ENCODE measurements at regions of chr6 and their contacts with region 1.

Region 1: DNA sequence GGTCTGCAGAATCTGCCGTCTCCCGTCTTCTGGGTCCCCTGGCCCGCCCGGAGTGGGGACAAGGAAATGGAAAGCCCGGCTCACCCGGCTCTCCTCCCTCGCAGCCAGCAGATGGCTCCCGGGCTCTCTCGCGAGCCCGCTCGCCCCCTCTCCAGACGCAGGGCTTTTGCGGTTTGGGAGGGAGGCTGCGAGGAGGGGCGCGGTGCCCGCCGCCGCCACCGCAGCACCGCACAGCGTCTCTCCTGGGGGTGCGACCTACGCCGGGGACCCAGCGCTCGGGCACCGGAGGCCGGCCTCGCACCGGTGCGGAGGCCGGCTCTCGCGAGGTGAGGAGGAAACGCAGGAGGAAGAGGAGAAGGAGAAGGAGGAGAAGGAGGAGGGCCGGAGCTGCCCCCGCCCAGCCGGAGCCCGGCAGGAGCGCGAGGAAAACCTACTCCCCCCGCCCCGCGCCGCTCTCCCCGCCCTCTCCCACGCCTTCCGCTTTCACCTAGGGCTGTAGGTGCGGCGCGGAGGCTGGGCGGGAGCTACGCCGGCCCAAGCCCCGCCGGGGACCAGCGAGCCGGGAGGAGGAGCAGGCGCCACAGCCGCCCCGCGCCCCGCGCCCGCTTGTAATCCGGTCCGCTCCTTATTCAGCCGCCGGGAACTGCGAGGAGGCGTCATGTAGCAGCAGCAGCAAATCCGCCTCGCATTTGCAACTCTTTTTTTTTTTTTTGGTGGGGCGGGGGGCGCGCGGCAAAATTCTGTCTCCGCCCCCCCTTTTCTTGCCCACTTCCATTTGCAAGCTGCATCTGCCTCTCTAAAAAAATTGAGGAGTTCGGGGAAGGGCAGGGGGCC is at the start of gene CARMIL1:
- DNase-seq: peak; percentile 17 to 80 (median 52)
- ATAC-seq: peak; percentile 75 to 82 (median 78)
- H3K4me3 ChIP-seq: peak within 1 kb of the TSS; percentile 67 to 88
- H3K4me3 Mint-ChIP-seq: peak within 1 kb of the TSS; percentile 85 to 90 (median 88)
- H3K27ac ChIP-seq: peak within 1 kb of the TSS; percentile 0
- H3K27ac Mint-ChIP-seq: peak within 1 kb of the TSS; percentile 68 to 75
- H3K4me1 ChIP-seq: peaks cover 14 to 22% of the 10 kb centered on the region in 2 experiments
- H3K4me1 Mint-ChIP-seq: peaks cover 30 to 35% (median 30%) of the 10 kb centered on the region in 3 donors
- H3K27me3 ChIP-seq: peaks cover 0 to 5% of the 10 kb centered on the region in 2 experiments
- H3K27me3 Mint-ChIP-seq: peaks cover 0 to 6% of the 10 kb centered on the region in 2 donors
- total RNA-seq, gene CARMIL1: 4.0 to 11.6 (median 6.1) TPM

Region 2: GRCh38 chr6:25263657-25264056 is 15.5 kb before region 1 on chr6:
- CTCF ChIA-PET with region 1: interaction called in 1 of 2 experiments, 12 read pairs
- POLR2A ChIA-PET with region 1: no interaction called
- DNase-seq: no peak
- ATAC-seq: no peak
- H3K4me3 ChIP-seq: no peak overlapping the region
- H3K4me3 Mint-ChIP-seq: no peak overlapping the region
- H3K27ac ChIP-seq: no peak overlapping the region
- H3K27ac Mint-ChIP-seq: no peak overlapping the region
- H3K4me1 ChIP-seq: peaks cover 0 to 3% of the 10 kb centered on the region in 2 experiments
- H3K4me1 Mint-ChIP-seq: peaks cover 2 to 6% (median 2%) of the 10 kb centered on the region in 3 donors
- H3K27me3 ChIP-seq: no peaks in the 10 kb centered on the region
- H3K27me3 Mint-ChIP-seq: peaks cover 3 to 7% of the 10 kb centered on the region in 2 donors

Region 3: GRCh38 chr6:25295651-25296050 is 16.5 kb after region 1 on chr6:
- CTCF ChIA-PET with region 1: no interaction called
- POLR2A ChIA-PET with region 1: no interaction called
- DNase-seq: no peak
- ATAC-seq: no peak
- H3K4me3 ChIP-seq: no peak overlapping the region
- H3K4me3 Mint-ChIP-seq: no peak overlapping the region
- H3K27ac ChIP-seq: no peak overlapping the region
- H3K27ac Mint-ChIP-seq: no peak overlapping the region
- H3K4me1 ChIP-seq: peaks cover 0 to 3% of the 10 kb centered on the region in 2 experiments
- H3K4me1 Mint-ChIP-seq: peaks cover 14 to 38% (median 26%) of the 10 kb centered on the region in 3 donors
- H3K27me3 ChIP-seq: no peaks in the 10 kb centered on the region
- H3K27me3 Mint-ChIP-seq: no peaks in the 10 kb centered on the region

Region 4: GRCh38 chr6:25369433-25370181 is 90.5 kb after region 1 on chr6:
- CTCF ChIA-PET with region 1: interaction called, 7 to 22 read pairs
- POLR2A ChIA-PET with region 1: no interaction called
- DNase-seq: peak in 21 of 35 experiments; percentile 2 to 53 (median 15)
- ATAC-seq: peak in 3 of 4 experiments; percentile 33 to 55 (median 37)
- H3K4me3 ChIP-seq: peak overlapping the region; percentile 2 to 33
- H3K4me3 Mint-ChIP-seq: peak overlapping the region; percentile 60 to 88 (median 66)
- H3K27ac ChIP-seq: peak overlapping the region; percentile 85
- H3K27ac Mint-ChIP-seq: peak overlapping the region; percentile 98
- H3K4me1 ChIP-seq: peaks cover 30 to 48% of the 10 kb centered on the region in 2 experiments
- H3K4me1 Mint-ChIP-seq: peaks cover 76 to 82% (median 79%) of the 10 kb centered on the region in 3 donors
- H3K27me3 ChIP-seq: no peaks in the 10 kb centered on the region
- H3K27me3 Mint-ChIP-seq: no peaks in the 10 kb centered on the region

Measured in T-cell (primary cell).